ENCODE measurements at regions of chr17 and their contacts with region 1.

Region 1: DNA sequence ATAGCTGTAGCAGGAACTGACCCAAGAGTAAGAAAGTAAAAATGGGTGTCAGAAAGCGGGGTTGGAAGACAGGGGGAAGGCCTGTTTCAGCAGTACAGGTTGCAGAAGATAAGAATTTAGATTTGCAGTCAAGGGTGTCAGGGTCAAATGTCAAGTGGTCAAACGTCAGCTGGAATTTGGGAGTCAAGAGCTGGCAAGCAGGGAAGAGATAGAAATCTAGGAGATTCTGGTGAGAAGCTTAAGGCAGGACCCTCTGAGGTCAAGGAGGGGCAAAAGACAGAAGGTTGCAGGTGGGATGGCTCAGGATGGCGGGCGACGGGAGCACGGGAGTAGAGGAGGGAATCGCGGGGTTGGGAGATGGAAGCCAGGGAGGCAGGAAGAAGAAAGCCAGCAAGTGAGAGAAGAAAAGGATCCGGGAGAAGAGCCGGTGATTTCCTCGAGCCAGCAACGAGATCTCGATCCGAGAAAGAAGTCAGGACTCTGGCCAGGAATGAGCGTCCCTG is 335 bp downstream of the SLC25A35 start:
- DNase-seq: no peak
- H3K4me3 ChIP-seq: peak overlapping the region; percentile 87
- H3K4me3 Mint-ChIP-seq: peak overlapping the region; percentile 89 to 96 (median 92)
- H3K27ac ChIP-seq: peak overlapping the region; percentile 81
- H3K27ac Mint-ChIP-seq: peak overlapping the region; percentile 86 to 99 (median 95)
- H3K4me1 ChIP-seq: peaks cover 17% of the 10 kb centered on the region
- H3K4me1 Mint-ChIP-seq: peaks cover 31 to 44% (median 31%) of the 10 kb centered on the region in 3 donors
- H3K27me3 ChIP-seq: no peaks in the 10 kb centered on the region
- H3K27me3 Mint-ChIP-seq: peaks cover 0 to 5% of the 10 kb centered on the region in 2 donors

Region 2: DNA sequence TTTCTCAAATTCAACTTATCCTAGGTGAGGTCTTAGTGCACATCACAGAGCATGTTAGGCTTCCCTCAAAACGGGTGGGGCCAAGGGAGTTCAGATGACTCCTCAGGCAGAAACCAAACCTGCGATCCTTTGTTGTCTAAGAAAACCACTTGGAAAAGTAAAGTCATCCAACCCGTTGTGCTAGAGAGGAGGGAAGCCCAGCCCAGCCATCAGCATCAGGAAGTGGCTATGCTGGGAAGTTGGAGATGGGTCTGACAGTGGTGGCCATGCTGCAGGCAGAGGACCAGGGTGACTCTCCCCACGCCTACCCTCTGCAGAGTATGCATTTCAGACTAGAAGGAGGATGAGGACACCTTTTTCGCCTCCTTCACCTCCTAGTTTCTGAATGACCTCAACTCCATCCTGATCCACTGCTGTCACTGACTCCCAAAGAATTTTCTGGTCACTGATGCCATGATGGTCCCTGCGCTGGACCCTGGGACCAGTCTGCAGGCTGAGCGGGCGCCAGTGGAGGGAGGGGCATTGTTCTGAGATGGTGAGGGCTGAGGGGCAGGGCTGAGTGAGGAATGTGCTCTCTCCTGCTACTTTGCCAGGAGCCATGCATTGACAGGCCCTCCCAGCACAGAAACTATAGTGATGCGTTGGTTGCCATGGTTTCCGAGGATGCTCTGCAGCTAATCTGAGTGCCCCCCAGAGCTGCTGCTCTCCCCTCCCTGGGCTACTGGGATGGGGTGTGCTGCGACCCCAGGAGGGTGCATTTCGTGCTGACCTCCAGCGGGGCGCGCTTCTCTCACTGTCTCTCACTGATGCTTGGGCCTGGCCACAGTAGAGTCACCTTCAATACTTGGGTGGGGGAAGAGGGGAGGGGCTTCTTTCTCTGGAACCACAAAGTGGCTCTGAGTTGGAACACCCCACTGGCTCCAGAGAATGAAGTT is 227.8 kb before region 1 on chr17:
- CTCF ChIA-PET with region 1: no interaction called
- POLR2A ChIA-PET with region 1: no interaction called
- DNase-seq: no peak
- H3K4me3 ChIP-seq: no peak overlapping the region
- H3K4me3 Mint-ChIP-seq: no peak overlapping the region
- H3K27ac ChIP-seq: no peak overlapping the region
- H3K27ac Mint-ChIP-seq: peak overlapping the region in 1 of 8 donors; percentile 81
- H3K4me1 ChIP-seq: peaks cover 2% of the 10 kb centered on the region
- H3K4me1 Mint-ChIP-seq: peaks cover 0 to 5% (median 0%) of the 10 kb centered on the region in 3 donors
- H3K27me3 ChIP-seq: peaks cover 7% of the 10 kb centered on the region
- H3K27me3 Mint-ChIP-seq: peaks cover 32 to 33% of the 10 kb centered on the region in 2 donors

Region 3: GRCh38 chr17:8156246-8156992 is 138.4 kb before region 1 on chr17:
- CTCF ChIA-PET with region 1: interaction called, 8 read pairs
- POLR2A ChIA-PET with region 1: interaction called, 10 read pairs
- DNase-seq: peak; percentile 100
- H3K4me3 ChIP-seq: peak overlapping the region; percentile 100
- H3K4me3 Mint-ChIP-seq: no peak overlapping the region
- H3K27ac ChIP-seq: peak overlapping the region; percentile 100
- H3K27ac Mint-ChIP-seq: no peak overlapping the region
- H3K4me1 ChIP-seq: peaks cover 77% of the 10 kb centered on the region
- H3K4me1 Mint-ChIP-seq: peaks cover 32 to 73% (median 48%) of the 10 kb centered on the region in 3 donors
- H3K27me3 ChIP-seq: no peaks in the 10 kb centered on the region
- H3K27me3 Mint-ChIP-seq: peaks cover 0 to 14% of the 10 kb centered on the region in 2 donors

Region 4: DNA sequence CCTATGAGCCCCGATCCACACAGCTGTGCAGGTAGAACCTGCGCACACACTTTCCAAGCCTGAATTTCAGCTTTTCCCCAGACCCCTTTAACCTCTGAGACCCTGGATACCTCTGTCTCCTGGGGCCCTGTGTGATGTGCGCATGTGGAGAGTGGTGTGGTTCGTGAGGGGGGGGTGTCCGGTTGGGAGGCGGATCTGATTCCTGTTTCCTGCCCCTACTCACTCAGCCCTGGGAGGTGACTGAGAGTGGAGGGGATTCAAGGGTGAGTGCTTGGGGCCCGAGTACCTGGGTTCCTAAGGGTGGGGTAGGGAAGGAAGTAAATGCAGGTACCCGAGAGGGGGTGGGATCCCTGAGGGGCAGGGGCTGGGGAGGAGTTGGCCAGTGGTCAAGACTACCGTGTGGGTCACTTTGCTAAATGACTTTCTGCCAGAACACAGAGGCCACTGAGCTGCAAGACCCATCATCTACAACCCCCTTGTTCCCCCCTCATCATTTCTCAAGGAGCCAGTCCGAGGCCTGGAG is 15.8 kb after region 1 on chr17:
- CTCF ChIA-PET with region 1: no interaction called
- POLR2A ChIA-PET with region 1: no interaction called
- DNase-seq: no peak
- H3K4me3 ChIP-seq: no peak overlapping the region
- H3K4me3 Mint-ChIP-seq: no peak overlapping the region
- H3K27ac ChIP-seq: no peak overlapping the region
- H3K27ac Mint-ChIP-seq: no peak overlapping the region
- H3K4me1 ChIP-seq: no peaks in the 10 kb centered on the region
- H3K4me1 Mint-ChIP-seq: no peaks in the 10 kb centered on the region
- H3K27me3 ChIP-seq: peaks cover 4% of the 10 kb centered on the region
- H3K27me3 Mint-ChIP-seq: peaks cover 19 to 22% of the 10 kb centered on the region in 2 donors